Heart left ventricle (tissue), 16 donors: ENCODE measurements at regions of chr4 and their contacts with region 1.

Region 1: GRCh38 chr4:6716018-6716911 is at the start of gene BLOC1S4:
- DNase-seq: peak; percentile 88 to 94 (median 91)
- ATAC-seq: peak; percentile 84 to 94 (median 93)
- H3K4me3 ChIP-seq: peak within 1 kb of the TSS; percentile 64 to 94 (median 76)
- H3K27ac ChIP-seq: peak within 1 kb of the TSS; percentile 80 to 97 (median 94)
- H3K4me1 ChIP-seq: peaks cover 6 to 38% (median 27%) of the 10 kb centered on the region in 12 donors
- H3K27me3 ChIP-seq: no peaks in the 10 kb centered on the region
- CTCF ChIP-seq: peak in 5 of 12 donors; percentile 13 to 36 (median 16)
- POLR2A ChIP-seq: peak in 1 of 2 donors; percentile 84
- total RNA-seq, gene BLOC1S4: 5.8 to 14.1 (median 7.8) TPM

Region 2: DNA sequence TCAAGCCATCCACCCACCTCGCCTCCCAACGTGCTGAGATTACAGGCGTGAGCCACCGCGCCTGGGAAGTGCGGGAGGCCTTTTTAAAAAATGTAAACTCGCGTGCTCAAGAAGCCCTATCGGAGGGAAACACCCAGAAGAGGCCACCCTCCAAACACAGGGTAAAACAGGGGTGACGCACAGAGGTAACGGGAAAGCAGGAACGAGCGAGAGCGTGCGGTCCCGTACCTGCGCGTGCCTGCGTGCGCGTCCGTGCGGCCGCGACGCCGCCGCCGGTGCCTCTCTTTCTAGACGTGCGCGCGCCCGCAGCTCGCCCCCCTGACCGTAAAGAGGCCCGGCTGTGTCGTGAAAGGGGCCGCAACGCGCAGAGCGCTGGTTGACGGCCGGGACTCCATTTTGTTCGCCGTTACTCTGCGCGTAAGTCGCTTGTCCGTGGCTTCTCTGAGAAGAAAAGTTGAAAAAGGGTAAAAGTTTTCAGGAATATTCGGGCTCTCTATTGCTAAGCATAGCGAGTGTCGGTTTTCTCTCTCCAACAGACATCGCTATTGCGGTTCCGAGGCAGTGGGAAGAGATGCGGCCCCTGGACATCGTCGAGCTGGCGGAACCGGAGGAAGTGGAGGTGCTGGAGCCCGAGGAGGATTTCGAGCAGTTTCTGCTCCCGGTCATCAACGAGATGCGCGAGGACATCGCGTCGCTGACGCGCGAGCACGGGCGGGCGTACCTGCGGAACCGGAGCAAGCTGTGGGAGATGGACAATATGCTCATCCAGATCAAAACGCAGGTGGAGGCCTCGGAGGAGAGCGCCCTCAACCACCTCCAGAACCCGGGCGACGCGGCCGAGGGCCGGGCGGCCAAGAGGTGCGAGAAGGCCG is 75.7 kb before region 1 on chr4 and contains the start of gene MRFAP1:
- intact Hi-C with region 1: loop called in 2 of 10 experiments (anchors 2 to 5 kb)
- DNase-seq: peak; percentile 95 to 97 (median 96)
- ATAC-seq: peak; percentile 87 to 96 (median 93)
- H3K4me3 ChIP-seq: peak within 1 kb of the TSS; percentile 48 to 96 (median 84)
- H3K27ac ChIP-seq: peak within 1 kb of the TSS; percentile 79 to 97 (median 93)
- H3K4me1 ChIP-seq: peaks cover 7 to 39% (median 28%) of the 10 kb centered on the region in 12 donors
- H3K27me3 ChIP-seq: no peaks in the 10 kb centered on the region
- CTCF ChIP-seq: peak in 1 of 12 donors; percentile 7
- POLR2A ChIP-seq: peak in 1 of 2 donors; percentile 68
- total RNA-seq, gene MRFAP1: 162 to 300 (median 239) TPM

Region 3: DNA sequence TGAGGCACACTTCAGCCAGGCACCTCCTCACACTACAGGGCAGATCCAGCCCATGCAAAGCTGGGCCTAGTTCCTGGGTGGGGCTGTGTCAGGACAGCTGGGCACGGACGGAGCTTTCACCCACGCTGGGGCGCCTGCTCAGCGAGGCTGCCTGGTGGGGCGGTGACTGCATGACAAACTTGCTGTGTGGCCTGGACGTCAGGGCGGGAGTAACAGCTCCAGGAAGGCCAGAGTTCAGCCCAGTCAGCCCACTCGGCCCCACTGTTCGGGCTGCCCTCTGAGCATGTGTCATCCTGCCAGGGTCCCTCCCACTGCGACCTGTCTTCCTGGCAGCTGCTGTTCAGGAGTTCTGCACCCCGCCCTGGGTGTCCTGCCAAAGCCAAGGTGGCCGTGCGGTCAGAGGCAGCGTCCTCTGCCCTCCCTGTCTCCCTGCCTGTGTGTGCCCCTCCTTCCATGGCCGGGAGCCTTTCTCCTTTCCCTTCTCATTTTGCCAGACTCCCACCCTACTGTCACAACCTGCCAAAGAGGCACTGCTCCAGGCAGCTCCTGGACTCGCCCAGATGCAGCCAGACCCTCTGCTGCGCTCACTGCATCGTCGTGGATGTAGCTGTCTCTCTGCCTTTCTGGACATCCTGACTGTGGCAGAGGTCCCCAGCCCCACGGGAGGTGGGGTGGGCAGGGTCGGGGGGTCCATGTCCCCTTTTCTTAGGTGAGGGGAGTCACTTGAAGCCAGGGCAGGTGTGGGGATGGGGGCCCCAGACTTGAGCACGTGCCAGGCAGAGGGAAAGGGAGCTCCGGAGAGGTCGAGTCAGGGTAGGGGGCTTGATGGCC is 33.3 kb after region 1 on chr4:
- intact Hi-C with region 1: no loop called
- DNase-seq: peak in 4 of 5 donors; percentile 57 to 84 (median 77)
- ATAC-seq: peak; percentile 27 to 82 (median 68)
- H3K4me3 ChIP-seq: no peak overlapping the region
- H3K27ac ChIP-seq: peak overlapping the region in 5 of 12 donors; percentile 13 to 58 (median 20)
- H3K4me1 ChIP-seq: peaks cover 0 to 45% (median 27%) of the 10 kb centered on the region in 12 donors
- H3K27me3 ChIP-seq: no peaks in the 10 kb centered on the region
- CTCF ChIP-seq: no peak
- POLR2A ChIP-seq: no peak

Region 4: GRCh38 chr4:6768539-6768905 is 52.3 kb after region 1 on chr4:
- intact Hi-C with region 1: loop called in 3 of 10 experiments (anchors 5 to 10 kb)
- DNase-seq: peak in 1 of 5 donors; percentile 67
- ATAC-seq: peak in 2 of 4 donors; percentile 40 to 54
- H3K4me3 ChIP-seq: no peak overlapping the region
- H3K27ac ChIP-seq: peak overlapping the region in 4 of 12 donors; percentile 12 to 69 (median 42)
- H3K4me1 ChIP-seq: peaks cover 0 to 53% (median 28%) of the 10 kb centered on the region in 12 donors
- H3K27me3 ChIP-seq: no peaks in the 10 kb centered on the region
- CTCF ChIP-seq: no peak
- POLR2A ChIP-seq: no peak

Region 5: DNA sequence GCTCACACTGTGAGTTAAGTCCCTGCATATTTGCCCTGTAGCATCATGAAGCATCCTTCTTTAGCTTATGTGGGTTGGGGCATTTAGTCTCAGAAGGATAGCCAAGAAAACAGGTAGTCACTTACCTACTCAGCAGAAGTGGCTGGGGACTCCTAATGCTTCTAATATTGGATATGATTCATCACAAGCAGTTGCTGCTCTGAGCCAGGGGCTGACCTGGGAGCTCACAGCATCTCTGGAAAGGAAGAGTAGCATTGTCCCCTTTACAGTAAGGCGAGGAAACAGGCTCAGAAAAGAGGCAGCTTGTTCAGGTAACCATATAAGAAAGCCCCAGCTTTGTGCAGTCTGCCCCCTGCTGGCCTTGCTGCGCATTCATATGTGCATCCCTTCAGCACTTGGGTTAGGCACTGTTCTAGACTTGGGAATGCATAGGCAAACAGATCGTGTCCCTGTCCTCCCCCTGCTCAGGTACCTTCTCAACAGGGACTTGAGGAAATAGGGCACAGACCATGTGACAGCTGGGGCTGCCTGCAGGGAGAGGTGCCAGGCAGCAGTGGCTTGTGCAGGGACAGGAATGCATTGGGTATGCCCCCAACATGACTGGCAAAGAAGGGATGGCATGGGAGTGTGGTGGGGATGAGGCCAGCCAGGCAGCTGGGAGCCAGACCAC is 157.7 kb after region 1 on chr4:
- intact Hi-C with region 1: loop called in 9 of 10 experiments (anchors 1 to 5 kb)
- DNase-seq: peak; percentile 59 to 83 (median 71)
- ATAC-seq: peak; percentile 52 to 78 (median 59)
- H3K4me3 ChIP-seq: no peak overlapping the region
- H3K27ac ChIP-seq: no peak overlapping the region
- H3K4me1 ChIP-seq: peaks cover 0 to 50% (median 26%) of the 10 kb centered on the region in 12 donors
- H3K27me3 ChIP-seq: no peaks in the 10 kb centered on the region
- CTCF ChIP-seq: peak; percentile 74 to 90 (median 82)
- POLR2A ChIP-seq: no peak

Region 6: DNA sequence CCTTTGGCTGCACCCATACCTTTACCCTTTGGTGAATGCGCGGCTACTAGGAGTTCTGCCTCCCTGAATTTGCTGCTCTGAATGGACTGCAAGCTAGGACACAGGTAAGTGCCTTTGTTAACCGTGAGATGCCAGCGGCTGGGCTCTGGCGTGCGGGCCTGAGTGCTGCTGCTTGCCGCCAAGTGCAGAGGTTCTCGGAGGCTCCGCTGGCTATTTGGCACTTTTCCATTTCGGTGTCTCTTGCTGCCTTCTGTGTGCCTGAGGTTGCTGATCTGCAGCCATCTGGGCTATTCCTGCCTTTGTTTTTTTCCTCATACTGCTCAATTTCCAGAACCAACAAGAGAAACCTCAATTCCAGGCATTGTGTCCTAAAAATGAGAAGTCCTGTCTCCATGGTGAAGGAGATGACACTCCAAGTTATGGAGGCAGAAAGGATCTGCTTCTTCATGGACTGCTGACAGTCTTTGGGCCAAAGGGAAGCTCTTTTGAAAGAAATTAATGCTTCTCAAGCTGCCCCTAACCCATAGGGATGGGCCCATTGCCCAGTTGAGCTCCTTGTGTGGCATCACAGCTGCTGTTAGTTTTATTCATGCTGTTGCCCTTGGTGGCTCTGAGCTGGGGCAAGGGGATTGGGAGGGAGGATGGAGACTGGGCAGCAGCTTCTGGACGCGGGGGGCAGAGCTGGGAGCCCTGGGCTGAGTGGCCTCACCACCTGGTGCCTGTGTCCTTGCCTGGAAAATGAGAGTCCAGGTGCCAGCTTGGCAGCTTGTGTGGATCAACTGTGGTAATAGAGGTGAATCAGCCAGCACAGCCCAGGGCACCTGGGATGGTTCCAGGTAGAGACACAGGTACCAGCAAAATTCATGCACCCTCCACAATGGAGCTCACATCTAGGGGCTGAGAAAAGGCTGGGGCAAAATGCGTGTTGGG is 189.5 kb after region 1 on chr4:
- intact Hi-C with region 1: no loop called
- DNase-seq: peak in 1 of 5 donors; percentile 49
- ATAC-seq: no peak
- H3K4me3 ChIP-seq: no peak overlapping the region
- H3K27ac ChIP-seq: no peak overlapping the region
- H3K4me1 ChIP-seq: peaks cover 4 to 34% (median 23%) of the 10 kb centered on the region in 12 donors
- H3K27me3 ChIP-seq: no peaks in the 10 kb centered on the region
- CTCF ChIP-seq: no peak
- POLR2A ChIP-seq: no peak

Region 7: DNA sequence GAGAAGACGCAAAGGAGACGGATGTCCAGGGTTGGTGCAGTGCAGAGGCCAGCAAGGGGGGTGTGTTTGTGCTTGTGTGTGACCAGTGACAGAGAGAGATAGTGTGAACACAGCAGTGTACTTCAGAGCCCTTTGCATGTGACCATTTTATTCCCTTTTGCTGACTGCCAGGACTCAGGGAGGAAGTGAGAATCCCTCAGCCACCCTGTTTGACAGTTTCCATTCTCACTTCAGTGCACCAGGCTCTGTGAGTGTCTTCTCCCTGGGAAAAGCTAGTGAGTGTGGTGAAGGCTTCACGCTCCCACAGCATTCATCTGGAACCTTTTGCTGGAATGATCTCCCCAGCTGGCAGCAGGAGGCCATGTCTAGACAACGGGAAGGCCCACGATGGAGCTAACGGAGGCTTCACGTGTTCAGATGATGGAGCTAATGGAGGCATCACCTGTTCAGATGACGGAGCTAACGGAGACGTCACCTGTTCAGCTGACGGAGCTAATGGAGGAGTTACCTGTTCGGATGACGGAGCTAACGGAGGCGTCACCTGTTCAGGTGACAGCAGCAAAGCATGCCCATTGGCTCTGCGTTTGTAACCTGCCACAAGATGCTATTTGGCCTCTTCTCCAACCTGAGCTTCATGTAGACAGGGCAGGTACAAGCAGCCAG is 1028.0 kb after region 1 on chr4:
- intact Hi-C with region 1: no loop called
- DNase-seq: no peak
- ATAC-seq: peak; percentile 17 to 68 (median 46)
- H3K4me3 ChIP-seq: no peak overlapping the region
- H3K27ac ChIP-seq: peak overlapping the region in 2 of 12 donors; percentile 24 to 77
- H3K4me1 ChIP-seq: peaks cover 0 to 18% (median 0%) of the 10 kb centered on the region in 12 donors
- H3K27me3 ChIP-seq: no peaks in the 10 kb centered on the region
- CTCF ChIP-seq: no peak
- POLR2A ChIP-seq: no peak